B cell (primary cell): ENCODE measurements at regions of chr3 and their contacts with region 1.

Region 1: GRCh38 chr3:102038477-102039142 is 189.3 kb downstream of the NFKBIZ start:
- DNase-seq: peak; percentile 66
- ATAC-seq: peak; percentile 66
- H3K4me3 ChIP-seq: peak overlapping the region in 1 of 5 experiments; percentile 35
- H3K4me3 Mint-ChIP-seq: peak overlapping the region; percentile 49
- H3K27ac ChIP-seq: peak overlapping the region; percentile 51 to 79
- H3K27ac Mint-ChIP-seq: peak overlapping the region; percentile 87
- H3K4me1 ChIP-seq: peaks cover 28 to 34% of the 10 kb centered on the region in 2 donors
- H3K4me1 Mint-ChIP-seq: peaks cover 41% of the 10 kb centered on the region
- H3K27me3 ChIP-seq: no peaks in the 10 kb centered on the region
- H3K27me3 Mint-ChIP-seq: no peaks in the 10 kb centered on the region
- CTCF ChIP-seq: no peak

Region 2: GRCh38 chr3:101995371-101996046 is 43.1 kb before region 1 on chr3:
- CTCF ChIA-PET with region 1: no interaction called
- POLR2A ChIA-PET with region 1: no interaction called
- intact Hi-C with region 1: loop called (anchors 5 kb)
- DNase-seq: no peak
- ATAC-seq: no peak
- H3K4me3 ChIP-seq: no peak overlapping the region
- H3K4me3 Mint-ChIP-seq: no peak overlapping the region
- H3K27ac ChIP-seq: no peak overlapping the region
- H3K27ac Mint-ChIP-seq: no peak overlapping the region
- H3K4me1 ChIP-seq: peaks cover 18 to 19% of the 10 kb centered on the region in 2 donors
- H3K4me1 Mint-ChIP-seq: peaks cover 31% of the 10 kb centered on the region
- H3K27me3 ChIP-seq: no peaks in the 10 kb centered on the region
- H3K27me3 Mint-ChIP-seq: no peaks in the 10 kb centered on the region
- CTCF ChIP-seq: no peak

Region 3: GRCh38 chr3:102078854-102079253 is 40.2 kb after region 1 on chr3:
- CTCF ChIA-PET with region 1: no interaction called
- POLR2A ChIA-PET with region 1: no interaction called
- intact Hi-C with region 1: no loop called
- DNase-seq: peak; percentile 28
- ATAC-seq: peak; percentile 62
- H3K4me3 ChIP-seq: no peak overlapping the region
- H3K4me3 Mint-ChIP-seq: peak overlapping the region; percentile 46
- H3K27ac ChIP-seq: peak overlapping the region; percentile 66 to 80
- H3K27ac Mint-ChIP-seq: peak overlapping the region; percentile 77
- H3K4me1 ChIP-seq: peaks cover 22 to 35% of the 10 kb centered on the region in 2 donors
- H3K4me1 Mint-ChIP-seq: peaks cover 30% of the 10 kb centered on the region
- H3K27me3 ChIP-seq: no peaks in the 10 kb centered on the region
- H3K27me3 Mint-ChIP-seq: no peaks in the 10 kb centered on the region
- CTCF ChIP-seq: no peak